Activated CD4-positive, alpha-beta memory T cell treated with anti-CD3 and anti-CD28 coated beads for 36 hours (primary cell): ENCODE measurements at regions of chr1 and their contacts with region 1.

Region 1: GRCh38 chr1:108503076-108503740 is 53.1 kb downstream of the NBPF6 start:
- DNase-seq: no peak
- H3K4me3 Mint-ChIP-seq: no peak overlapping the region
- H3K27ac Mint-ChIP-seq: no peak overlapping the region
- H3K4me1 Mint-ChIP-seq: peaks cover 1% of the 10 kb centered on the region
- H3K27me3 Mint-ChIP-seq: peaks cover 22% of the 10 kb centered on the region

Region 2: DNA sequence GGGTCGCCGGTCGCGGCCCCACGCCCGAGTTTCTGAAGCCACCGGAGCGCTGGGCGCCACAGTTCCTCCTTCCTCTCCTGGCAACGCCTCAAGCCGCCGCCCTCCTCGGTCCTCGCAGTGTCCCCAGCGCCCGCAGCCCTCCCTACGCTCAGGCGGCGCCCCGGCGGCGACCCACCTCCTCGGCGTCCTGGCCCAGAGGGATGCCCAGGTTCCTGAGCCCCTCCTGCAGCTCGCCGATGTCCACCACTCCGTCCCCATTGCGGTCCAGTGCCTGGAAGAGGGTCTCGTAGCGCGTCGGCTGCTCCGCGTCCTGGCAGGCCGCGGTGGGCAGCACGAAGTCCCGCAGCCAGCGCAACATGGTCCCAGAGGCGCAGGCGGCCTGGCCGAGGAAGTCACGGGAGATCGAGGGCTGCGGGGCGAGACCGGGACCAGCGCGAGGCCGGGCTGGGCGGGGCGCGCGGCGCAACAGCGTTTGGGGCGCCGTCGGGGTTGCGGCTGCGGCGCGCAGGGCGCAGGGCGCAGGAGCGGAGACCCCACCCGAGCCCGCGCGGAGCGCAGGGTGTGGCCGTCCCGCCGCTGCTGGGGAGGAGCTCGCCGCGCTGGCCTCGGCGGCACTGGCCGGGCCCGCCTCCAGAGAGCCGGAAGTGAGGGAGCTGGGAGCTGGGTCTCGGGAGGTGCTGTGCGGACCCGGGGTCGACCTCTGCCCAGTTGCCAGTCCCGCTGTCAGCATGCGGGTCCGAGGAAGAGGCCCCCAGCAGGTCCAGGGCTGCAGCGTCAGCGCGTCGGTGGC is 303.2 kb before region 1 on chr1 and contains the start of gene SLC25A24:
- CTCF ChIA-PET with region 1: no interaction called
- POLR2A ChIA-PET with region 1: no interaction called
- intact Hi-C with region 1: loop called (anchors 5 kb)
- DNase-seq: peak; percentile 83
- H3K4me3 Mint-ChIP-seq: peak within 1 kb of the TSS; percentile 85
- H3K27ac Mint-ChIP-seq: peak within 1 kb of the TSS; percentile 61
- H3K4me1 Mint-ChIP-seq: peaks cover 29% of the 10 kb centered on the region
- H3K27me3 Mint-ChIP-seq: no peaks in the 10 kb centered on the region
- total RNA-seq, gene SLC25A24: 18.1 to 19.4 TPM

Region 3: GRCh38 chr1:108521990-108522393 is 18.8 kb after region 1 on chr1:
- CTCF ChIA-PET with region 1: no interaction called
- POLR2A ChIA-PET with region 1: no interaction called
- intact Hi-C with region 1: no loop called
- DNase-seq: no peak
- H3K4me3 Mint-ChIP-seq: no peak overlapping the region
- H3K27ac Mint-ChIP-seq: no peak overlapping the region
- H3K4me1 Mint-ChIP-seq: no peaks in the 10 kb centered on the region
- H3K27me3 Mint-ChIP-seq: no peaks in the 10 kb centered on the region

Region 4: GRCh38 chr1:108551137-108551862 is 48.1 kb after region 1 on chr1:
- CTCF ChIA-PET with region 1: no interaction called
- POLR2A ChIA-PET with region 1: no interaction called
- intact Hi-C with region 1: loop called (anchors 1 kb)
- DNase-seq: no peak
- H3K4me3 Mint-ChIP-seq: no peak overlapping the region
- H3K27ac Mint-ChIP-seq: no peak overlapping the region
- H3K4me1 Mint-ChIP-seq: peaks cover 3% of the 10 kb centered on the region
- H3K27me3 Mint-ChIP-seq: peaks cover 4% of the 10 kb centered on the region

Region 5: DNA sequence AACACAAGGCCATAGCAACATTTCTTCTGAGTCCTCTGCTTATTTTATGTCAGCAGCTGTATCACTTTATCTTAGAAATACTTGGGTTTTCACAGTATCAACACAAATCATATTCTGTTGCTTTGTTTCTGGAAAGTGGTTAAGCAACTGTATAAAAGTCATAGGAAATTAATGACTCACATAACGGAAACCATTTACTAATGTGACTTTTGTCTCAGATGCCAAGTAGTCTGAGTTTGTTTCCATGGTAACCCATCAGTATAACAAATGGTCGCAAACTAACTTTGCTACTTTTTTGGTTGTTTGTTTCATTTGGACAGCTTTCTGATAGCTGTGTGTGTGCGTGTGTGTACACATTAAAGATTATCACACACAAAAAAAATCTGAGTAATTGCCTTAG is 87.7 kb after region 1 on chr1:
- CTCF ChIA-PET with region 1: no interaction called
- POLR2A ChIA-PET with region 1: no interaction called
- intact Hi-C with region 1: loop called (anchors 1 kb)
- DNase-seq: no peak
- H3K4me3 Mint-ChIP-seq: no peak overlapping the region
- H3K27ac Mint-ChIP-seq: no peak overlapping the region
- H3K4me1 Mint-ChIP-seq: peaks cover 44% of the 10 kb centered on the region
- H3K27me3 Mint-ChIP-seq: no peaks in the 10 kb centered on the region

Region 6: GRCh38 chr1:108601708-108602410 is 98.7 kb after region 1 on chr1:
- CTCF ChIA-PET with region 1: no interaction called
- POLR2A ChIA-PET with region 1: no interaction called
- intact Hi-C with region 1: no loop called
- DNase-seq: no peak
- H3K4me3 Mint-ChIP-seq: no peak overlapping the region
- H3K27ac Mint-ChIP-seq: no peak overlapping the region
- H3K4me1 Mint-ChIP-seq: no peaks in the 10 kb centered on the region
- H3K27me3 Mint-ChIP-seq: no peaks in the 10 kb centered on the region

Region 7: GRCh38 chr1:108708691-108709660 is 205.8 kb after region 1 on chr1:
- CTCF ChIA-PET with region 1: interaction called, 4 read pairs
- POLR2A ChIA-PET with region 1: no interaction called
- intact Hi-C with region 1: loop called (anchors 2 kb)
- DNase-seq: peak; percentile 83
- H3K4me3 Mint-ChIP-seq: no peak overlapping the region
- H3K27ac Mint-ChIP-seq: no peak overlapping the region
- H3K4me1 Mint-ChIP-seq: peaks cover 28% of the 10 kb centered on the region
- H3K27me3 Mint-ChIP-seq: peaks cover 4% of the 10 kb centered on the region